H1 (cell line): ENCODE measurements at regions of chr2 and their contacts with region 1.

Region 1: GRCh38 chr2:101030863-101031554 is 28.9 kb downstream of the RPL31 start:
- DNase-seq: no peak
- H3K4me3 ChIP-seq: no peak overlapping the region
- H3K27ac ChIP-seq: no peak overlapping the region
- H3K4me1 ChIP-seq: peaks cover 2 to 9% (median 4%) of the 10 kb centered on the region in 4 experiments; a peak in 5 of 7 replicates
- H3K27me3 ChIP-seq: no peaks in the 10 kb centered on the region
- CTCF ChIP-seq: no peak
- EP300 ChIP-seq: no peak
- POLR2A ChIP-seq: no peak
- RAD21 ChIP-seq: no peak

Region 2: GRCh38 chr2:101007415-101008345 is 23.3 kb before region 1 on chr2:
- CTCF ChIA-PET with region 1: interaction called, 12 read pairs
- POLR2A ChIA-PET with region 1: interaction called, 29 read pairs
- DNase-seq: no peak
- H3K4me3 ChIP-seq: no peak overlapping the region
- H3K27ac ChIP-seq: no peak overlapping the region
- H3K4me1 ChIP-seq: peaks cover 0 to 8% (median 7%) of the 10 kb centered on the region in 4 experiments; a peak in 4 of 7 replicates
- H3K27me3 ChIP-seq: no peaks in the 10 kb centered on the region; a peak in 1 of 7 replicates
- CTCF ChIP-seq: no peak
- EP300 ChIP-seq: no peak
- POLR2A ChIP-seq: peak; percentile 75 to 76
- RAD21 ChIP-seq: no peak

Region 3: GRCh38 chr2:101012706-101013181 is 18.3 kb before region 1 on chr2:
- CTCF ChIA-PET with region 1: interaction called, 12 read pairs
- POLR2A ChIA-PET with region 1: interaction called, 14 read pairs
- DNase-seq: peak in 1 of 2 experiments; percentile 60
- H3K4me3 ChIP-seq: no peak overlapping the region
- H3K27ac ChIP-seq: no peak overlapping the region
- H3K4me1 ChIP-seq: no peaks in the 10 kb centered on the region; a peak in 1 of 7 replicates
- H3K27me3 ChIP-seq: no peaks in the 10 kb centered on the region
- CTCF ChIP-seq: peak in 2 of 3 experiments; percentile 55 to 77; a peak in 3 of 4 replicates
- EP300 ChIP-seq: no peak
- POLR2A ChIP-seq: no peak
- RAD21 ChIP-seq: peak; percentile 84 to 89